IMR-90 (cell line): ENCODE measurements at regions of chr9 and their contacts with region 1.

Region 1: DNA sequence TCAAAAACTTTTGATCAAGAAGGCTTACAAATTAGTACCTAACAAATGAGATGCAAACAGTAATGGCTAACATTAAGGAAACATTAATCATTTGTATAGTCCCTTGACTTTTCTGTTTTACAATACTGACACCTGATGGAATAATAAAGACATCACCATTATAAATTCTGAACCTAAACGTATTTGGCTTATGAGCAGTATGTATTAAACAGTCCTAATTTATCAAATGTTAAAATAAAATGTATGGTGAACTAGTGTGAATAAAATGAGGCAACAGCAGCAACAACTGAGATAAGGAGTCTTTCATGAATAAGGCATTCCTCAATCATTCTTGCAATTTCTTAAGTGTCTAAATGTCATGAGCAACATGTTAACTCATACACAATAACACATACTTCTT is 6.0 kb downstream of the PUM3 start:
- DNase-seq: peak; percentile 35
- ATAC-seq: 0 out of 2 replicates have a peak, but pooled peaks have one; percentile 10
- H3K4me3 ChIP-seq: peak overlapping the region; percentile 32; the same call in 1 of the 2 replicates
- H3K27ac ChIP-seq: peak overlapping the region; percentile 44; the same call in 1 of the 2 replicates
- H3K4me1 ChIP-seq: peaks cover 14% of the 10 kb centered on the region; the same call in 1 of the 2 replicates
- H3K27me3 ChIP-seq: no peaks in the 10 kb centered on the region
- CTCF ChIP-seq: peak; percentile 47
- POLR2A ChIP-seq: no peak
- RAD21 ChIP-seq: peak; percentile 60

Region 2: GRCh38 chr9:2125906-2126305 is 712.0 kb before region 1 on chr9:
- CTCF ChIA-PET with region 1: no interaction called
- POLR2A ChIA-PET with region 1: no interaction called
- dilution Hi-C with region 1: no loop called
- in situ Hi-C with region 1: loop called (anchors 10 kb)
- intact Hi-C with region 1: loop called (anchors 5 kb)
- DNase-seq: peak; percentile 30
- ATAC-seq: peak; percentile 65
- H3K4me3 ChIP-seq: no peak overlapping the region
- H3K27ac ChIP-seq: peak overlapping the region; percentile 1; the same call in 1 of the 2 replicates
- H3K4me1 ChIP-seq: peaks cover 11% of the 10 kb centered on the region
- H3K27me3 ChIP-seq: no peaks in the 10 kb centered on the region
- CTCF ChIP-seq: no peak
- POLR2A ChIP-seq: no peak
- RAD21 ChIP-seq: no peak

Region 3: GRCh38 chr9:2158111-2158610 is 679.8 kb before region 1 on chr9:
- CTCF ChIA-PET with region 1: no interaction called
- POLR2A ChIA-PET with region 1: no interaction called
- dilution Hi-C with region 1: no loop called
- in situ Hi-C with region 1: no loop called
- intact Hi-C with region 1: loop called (anchors 5 kb)
- DNase-seq: peak; percentile 67
- ATAC-seq: peak; percentile 54
- H3K4me3 ChIP-seq: peak overlapping the region; percentile 41
- H3K27ac ChIP-seq: peak overlapping the region; percentile 79
- H3K4me1 ChIP-seq: peaks cover 5% of the 10 kb centered on the region; the same call in 1 of the 2 replicates
- H3K27me3 ChIP-seq: no peaks in the 10 kb centered on the region
- CTCF ChIP-seq: peak; percentile 23; the same call in 1 of the 2 replicates
- POLR2A ChIP-seq: no peak
- RAD21 ChIP-seq: no peak

Region 4: DNA sequence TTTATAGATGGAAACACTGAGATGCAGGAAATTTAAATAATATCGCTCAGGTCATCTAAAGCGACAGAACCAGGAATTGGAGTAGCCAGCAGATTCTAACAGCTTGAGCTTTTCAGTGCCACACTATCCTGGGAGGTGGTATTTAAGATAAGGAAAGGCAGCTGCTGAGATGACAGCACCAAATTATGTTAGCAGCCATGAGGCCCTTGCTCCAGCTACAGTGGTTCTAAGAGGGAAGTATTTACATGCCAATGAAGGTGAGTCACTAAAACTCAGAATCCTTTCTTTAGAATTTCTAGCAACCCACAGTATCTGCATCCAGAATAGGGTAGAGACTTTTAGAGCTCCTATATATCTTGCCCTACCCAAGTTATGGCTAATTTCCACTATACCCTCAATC is 343.4 kb before region 1 on chr9:
- CTCF ChIA-PET with region 1: no interaction called
- POLR2A ChIA-PET with region 1: no interaction called
- dilution Hi-C with region 1: no loop called
- in situ Hi-C with region 1: no loop called
- intact Hi-C with region 1: loop called (anchors 10 kb)
- DNase-seq: peak; percentile 88
- ATAC-seq: peak; percentile 94
- H3K4me3 ChIP-seq: no peak overlapping the region
- H3K27ac ChIP-seq: peak overlapping the region; percentile 76; the same call in 1 of the 2 replicates
- H3K4me1 ChIP-seq: peaks cover 12% of the 10 kb centered on the region
- H3K27me3 ChIP-seq: no peaks in the 10 kb centered on the region
- CTCF ChIP-seq: no peak
- POLR2A ChIP-seq: no peak
- RAD21 ChIP-seq: 0 out of 2 replicates have a peak, but pooled peaks have one; percentile 11

Region 5: GRCh38 chr9:2645569-2645968 is 192.3 kb before region 1 on chr9:
- CTCF ChIA-PET with region 1: no interaction called
- POLR2A ChIA-PET with region 1: no interaction called
- dilution Hi-C with region 1: no loop called
- in situ Hi-C with region 1: no loop called
- intact Hi-C with region 1: loop called (anchors 5 kb)
- DNase-seq: no peak
- ATAC-seq: no peak
- H3K4me3 ChIP-seq: no peak overlapping the region
- H3K27ac ChIP-seq: no peak overlapping the region
- H3K4me1 ChIP-seq: no peaks in the 10 kb centered on the region
- H3K27me3 ChIP-seq: no peaks in the 10 kb centered on the region
- CTCF ChIP-seq: no peak
- POLR2A ChIP-seq: no peak
- RAD21 ChIP-seq: no peak

Region 6: GRCh38 chr9:2727966-2728613 is 109.8 kb before region 1 on chr9:
- CTCF ChIA-PET with region 1: no interaction called
- POLR2A ChIA-PET with region 1: no interaction called
- dilution Hi-C with region 1: no loop called
- in situ Hi-C with region 1: no loop called
- intact Hi-C with region 1: no loop called
- DNase-seq: peak; percentile 71
- ATAC-seq: peak; percentile 90
- H3K4me3 ChIP-seq: no peak overlapping the region
- H3K27ac ChIP-seq: no peak overlapping the region
- H3K4me1 ChIP-seq: peaks cover 8% of the 10 kb centered on the region
- H3K27me3 ChIP-seq: no peaks in the 10 kb centered on the region
- CTCF ChIP-seq: peak; percentile 71
- POLR2A ChIP-seq: no peak
- RAD21 ChIP-seq: peak; percentile 64

Region 7: DNA sequence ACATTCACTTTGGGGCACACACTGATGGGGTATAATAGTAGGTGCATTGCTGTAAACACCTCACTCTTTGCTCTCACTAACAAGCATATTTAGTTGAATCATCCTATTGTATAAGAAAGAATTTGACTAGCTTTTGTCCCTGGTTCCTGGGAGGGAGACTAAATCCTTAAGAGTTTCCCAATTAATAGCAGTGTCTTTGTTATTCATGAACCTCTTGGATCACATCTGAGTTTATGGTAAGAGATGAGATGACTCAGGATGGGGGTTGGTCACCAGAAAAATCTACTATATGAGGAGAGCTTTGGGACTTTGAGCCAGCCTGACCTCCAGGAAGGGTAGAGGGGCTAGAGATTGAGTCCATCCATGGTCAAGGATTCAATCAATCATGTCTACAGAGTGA is 50.9 kb before region 1 on chr9:
- CTCF ChIA-PET with region 1: no interaction called
- POLR2A ChIA-PET with region 1: no interaction called
- dilution Hi-C with region 1: no loop called
- in situ Hi-C with region 1: loop called (anchors 5 kb)
- intact Hi-C with region 1: no loop called
- DNase-seq: peak; percentile 73
- ATAC-seq: peak; percentile 80
- H3K4me3 ChIP-seq: no peak overlapping the region
- H3K27ac ChIP-seq: peak overlapping the region; percentile 30; the same call in 1 of the 2 replicates
- H3K4me1 ChIP-seq: peaks cover 9% of the 10 kb centered on the region
- H3K27me3 ChIP-seq: no peaks in the 10 kb centered on the region
- CTCF ChIP-seq: no peak
- POLR2A ChIP-seq: no peak
- RAD21 ChIP-seq: no peak